Motor neuron (in vitro differentiated cells): ENCODE measurements at regions of chr13 and their contacts with region 1.

Region 1: GRCh38 chr13:101942038-101942437 is 459.8 kb downstream of the FGF14 start:
- ATAC-seq: peak; percentile 76 to 92 (median 86)
- H3K4me3 ChIP-seq: no peak overlapping the region
- H3K27ac ChIP-seq: no peak overlapping the region
- H3K4me1 ChIP-seq: no peaks in the 10 kb centered on the region

Region 2: DNA sequence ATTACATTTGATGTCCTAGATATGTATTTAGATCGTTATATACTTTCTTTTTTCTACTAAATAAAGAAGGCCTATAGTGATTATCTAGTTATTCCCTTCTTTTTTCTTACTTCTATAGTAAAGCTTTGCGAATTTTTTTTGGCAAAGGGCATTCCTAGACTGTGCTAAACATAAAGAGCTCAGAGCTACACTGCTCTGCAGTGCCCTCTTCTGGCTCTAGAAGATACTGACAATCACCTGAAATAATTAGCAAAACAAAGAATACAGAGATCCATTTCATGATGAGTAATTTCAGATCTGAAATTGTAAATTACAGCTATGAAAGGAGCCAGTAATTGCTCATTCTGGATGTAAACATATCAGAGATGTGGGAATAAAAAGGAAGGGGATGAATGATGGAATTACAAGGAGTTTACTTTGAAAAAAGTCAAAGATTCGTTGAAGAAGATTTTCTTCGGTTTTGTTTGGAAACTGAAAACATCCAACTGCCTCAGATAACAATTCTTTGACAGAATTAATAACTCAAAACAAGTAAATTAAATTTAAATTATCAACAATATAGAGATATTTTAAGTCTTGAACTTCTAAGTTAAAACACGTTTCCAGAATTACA is 814.2 kb before region 1 on chr13:
- in situ Hi-C with region 1: loop called in 3 of 9 experiments (anchors 25 kb)
- ATAC-seq: peak; percentile 40 to 72 (median 51)
- H3K4me3 ChIP-seq: no peak overlapping the region
- H3K27ac ChIP-seq: no peak overlapping the region
- H3K4me1 ChIP-seq: no peaks in the 10 kb centered on the region

Region 3: GRCh38 chr13:101149735-101150380 is 792.2 kb before region 1 on chr13:
- in situ Hi-C with region 1: loop called in 4 of 9 experiments (anchors 25 kb)
- ATAC-seq: peak in 4 of 8 experiments; percentile 21 to 89 (median 65)
- H3K4me3 ChIP-seq: no peak overlapping the region
- H3K27ac ChIP-seq: no peak overlapping the region
- H3K4me1 ChIP-seq: peaks cover 0 to 3% of the 10 kb centered on the region in 2 donors

Region 4: DNA sequence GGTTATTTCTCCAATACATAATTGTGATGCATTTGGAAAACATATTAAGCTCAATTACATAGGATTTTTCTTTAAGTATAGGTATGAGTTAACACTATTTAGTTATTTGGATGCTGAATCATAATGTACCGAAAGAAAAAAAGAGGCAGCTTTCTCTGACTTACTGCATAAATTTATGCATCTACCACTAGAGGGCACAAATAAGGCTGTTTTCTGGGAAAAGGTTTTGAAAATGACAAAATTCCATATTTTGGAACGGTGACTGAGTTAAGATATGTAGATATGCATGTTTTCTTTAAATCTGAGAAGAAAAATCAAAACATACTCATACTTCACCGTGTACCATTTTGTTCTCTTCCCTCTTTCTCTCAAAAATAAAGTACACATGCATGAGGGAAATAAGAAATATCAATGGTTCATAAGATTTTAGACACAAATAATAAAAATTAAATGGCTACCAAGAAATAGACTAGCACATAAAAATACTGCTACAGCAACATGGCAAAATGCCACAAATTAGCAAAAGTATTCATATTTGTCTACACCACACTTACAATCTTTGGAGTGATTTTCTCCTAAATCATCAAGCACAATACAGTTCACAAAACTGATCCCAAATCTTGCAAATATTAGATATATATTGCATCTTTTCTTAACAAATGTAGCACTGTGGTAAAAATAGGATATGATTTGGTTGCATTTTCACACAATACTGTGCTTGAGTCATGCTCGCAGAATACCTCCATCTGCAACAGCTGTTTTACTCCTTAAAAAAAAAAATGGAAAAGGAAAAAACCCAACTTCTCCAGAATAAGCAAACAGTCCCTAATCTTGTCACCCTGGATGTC is 199.8 kb after region 1 on chr13:
- in situ Hi-C with region 1: loop called in 1 of 9 experiments (anchors 25 kb)
- ATAC-seq: no peak
- H3K4me3 ChIP-seq: no peak overlapping the region
- H3K27ac ChIP-seq: no peak overlapping the region
- H3K4me1 ChIP-seq: no peaks in the 10 kb centered on the region

Region 5: GRCh38 chr13:102452831-102453230 is 510.8 kb after region 1 on chr13:
- in situ Hi-C with region 1: loop called in 1 of 9 experiments (anchors 10 kb)
- ATAC-seq: no peak
- H3K4me3 ChIP-seq: no peak overlapping the region
- H3K27ac ChIP-seq: no peak overlapping the region
- H3K4me1 ChIP-seq: no peaks in the 10 kb centered on the region

Region 6: GRCh38 chr13:102555917-102556553 is 614.0 kb after region 1 on chr13:
- in situ Hi-C with region 1: loop called in 4 of 9 experiments (anchors 10 to 25 kb)
- ATAC-seq: peak in 3 of 8 experiments; percentile 77 to 85 (median 77)
- H3K4me3 ChIP-seq: no peak overlapping the region
- H3K27ac ChIP-seq: no peak overlapping the region
- H3K4me1 ChIP-seq: no peaks in the 10 kb centered on the region

Region 7: DNA sequence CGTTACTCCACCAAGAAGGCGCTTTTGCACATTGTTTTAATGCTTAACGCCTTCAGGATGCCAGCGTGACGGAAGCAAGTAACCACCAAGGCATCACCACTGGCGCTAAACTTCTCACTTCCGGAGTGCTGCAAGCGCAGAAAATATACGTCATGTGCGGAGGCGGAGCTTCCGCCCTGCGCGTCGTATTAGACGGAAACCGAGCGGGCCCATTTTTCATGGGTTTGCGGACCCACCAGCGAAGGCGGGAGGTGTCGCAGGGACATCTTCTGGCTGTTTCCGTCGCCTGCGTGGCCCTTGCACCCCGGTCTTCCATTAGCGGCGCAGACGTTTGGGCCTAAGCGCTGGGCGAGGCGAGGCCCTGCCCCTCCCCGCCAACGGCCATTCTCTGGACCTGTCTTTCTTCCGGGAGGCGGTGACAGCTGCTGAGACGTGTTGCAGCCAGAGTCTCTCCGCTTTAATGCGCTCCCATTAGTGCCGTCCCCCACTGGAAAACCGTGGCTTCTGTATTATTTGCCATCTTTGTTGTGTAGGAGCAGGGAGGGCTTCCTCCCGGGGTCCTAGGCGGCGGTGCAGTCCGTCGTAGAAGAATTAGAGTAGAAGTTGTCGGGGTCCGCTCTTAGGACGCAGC is 903.7 kb after region 1 on chr13 and contains the start of gene ERCC5:
- in situ Hi-C with region 1: loop called in 1 of 9 experiments (anchors 25 kb)
- ATAC-seq: peak; percentile 85 to 93 (median 91)
- H3K4me3 ChIP-seq: peak within 1 kb of the TSS; percentile 62 to 91 (median 81)
- H3K27ac ChIP-seq: peak within 1 kb of the TSS; percentile 87 to 95
- H3K4me1 ChIP-seq: peaks cover 4 to 5% of the 10 kb centered on the region in 2 donors
- total RNA-seq, gene ERCC5: 40.2 to 83.3 (median 57.7) TPM